ENCODE measurements at regions of chr7 and their contacts with region 1.

Region 1: GRCh38 chr7:85454904-85455303 is 268.0 kb upstream of the SEMA3D start:
- DNase-seq: no peak
- H3K4me3 ChIP-seq: no peak overlapping the region
- H3K27ac ChIP-seq: no peak overlapping the region
- H3K4me1 ChIP-seq: no peaks in the 10 kb centered on the region
- H3K27me3 ChIP-seq: no peaks in the 10 kb centered on the region
- CTCF ChIP-seq: no peak
- POLR2A ChIP-seq: no peak

Region 2: GRCh38 chr7:84865560-84865959 is 589.3 kb before region 1 on chr7:
- intact Hi-C with region 1: no loop called
- DNase-seq: no peak
- H3K4me3 ChIP-seq: no peak overlapping the region
- H3K27ac ChIP-seq: no peak overlapping the region
- H3K4me1 ChIP-seq: no peaks in the 10 kb centered on the region
- H3K27me3 ChIP-seq: no peaks in the 10 kb centered on the region
- CTCF ChIP-seq: no peak
- POLR2A ChIP-seq: no peak

Region 3: GRCh38 chr7:85261336-85261735 is 193.6 kb before region 1 on chr7:
- intact Hi-C with region 1: no loop called
- DNase-seq: no peak
- H3K4me3 ChIP-seq: no peak overlapping the region
- H3K27ac ChIP-seq: no peak overlapping the region
- H3K4me1 ChIP-seq: no peaks in the 10 kb centered on the region
- H3K27me3 ChIP-seq: no peaks in the 10 kb centered on the region
- CTCF ChIP-seq: no peak
- POLR2A ChIP-seq: no peak

Region 4: GRCh38 chr7:85405016-85405902 is 49.6 kb before region 1 on chr7:
- intact Hi-C with region 1: no loop called
- DNase-seq: no peak
- H3K4me3 ChIP-seq: no peak overlapping the region
- H3K27ac ChIP-seq: no peak overlapping the region
- H3K4me1 ChIP-seq: no peaks in the 10 kb centered on the region
- H3K27me3 ChIP-seq: no peaks in the 10 kb centered on the region
- CTCF ChIP-seq: no peak
- POLR2A ChIP-seq: no peak

Region 5: DNA sequence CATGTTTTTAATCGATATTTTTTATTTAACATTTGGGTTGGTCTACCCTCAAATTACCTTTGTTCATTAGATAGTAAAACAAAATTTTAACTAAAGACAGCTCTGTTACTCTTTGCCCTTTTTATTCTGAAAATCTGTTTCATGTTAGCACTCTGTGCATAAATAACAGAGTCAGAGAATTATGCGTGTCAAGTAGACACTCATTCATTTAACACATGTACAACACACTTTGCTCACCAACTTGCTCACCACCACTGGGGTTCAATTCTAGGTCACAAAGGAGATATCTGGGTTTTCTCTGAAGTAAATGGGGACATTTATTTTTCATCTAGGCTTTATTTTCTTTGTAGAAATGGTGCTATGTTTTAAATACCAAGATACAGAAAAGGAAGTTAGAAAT is 189.4 kb after region 1 on chr7:
- intact Hi-C with region 1: no loop called
- DNase-seq: no peak
- H3K4me3 ChIP-seq: no peak overlapping the region
- H3K27ac ChIP-seq: no peak overlapping the region
- H3K4me1 ChIP-seq: no peaks in the 10 kb centered on the region
- H3K27me3 ChIP-seq: no peaks in the 10 kb centered on the region
- CTCF ChIP-seq: no peak
- POLR2A ChIP-seq: no peak

Region 6: DNA sequence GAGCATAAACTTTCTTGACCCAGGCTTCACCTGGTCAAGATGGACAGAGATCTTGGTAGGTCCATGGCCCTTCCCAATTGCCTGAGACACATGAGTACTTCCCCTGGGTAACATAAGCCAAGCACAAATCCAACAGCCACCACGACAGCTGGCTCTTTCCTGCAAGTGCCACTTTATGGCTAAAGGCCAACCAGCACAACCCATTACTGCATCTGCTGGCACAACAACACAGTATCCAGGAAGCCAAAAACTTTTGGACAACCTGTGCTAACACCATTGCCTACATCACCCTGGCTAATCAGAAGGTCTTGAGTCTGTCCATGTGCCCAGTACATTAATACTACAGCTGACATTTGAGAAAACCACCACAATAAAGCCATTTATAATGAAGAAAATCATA is 279.9 kb after region 1 on chr7:
- intact Hi-C with region 1: loop called (anchors 5 kb)
- DNase-seq: no peak
- H3K4me3 ChIP-seq: no peak overlapping the region
- H3K27ac ChIP-seq: no peak overlapping the region
- H3K4me1 ChIP-seq: no peaks in the 10 kb centered on the region
- H3K27me3 ChIP-seq: no peaks in the 10 kb centered on the region
- CTCF ChIP-seq: no peak
- POLR2A ChIP-seq: no peak